A549 (cell line): ENCODE measurements at regions of chrX and their contacts with region 1.

Region 1: DNA sequence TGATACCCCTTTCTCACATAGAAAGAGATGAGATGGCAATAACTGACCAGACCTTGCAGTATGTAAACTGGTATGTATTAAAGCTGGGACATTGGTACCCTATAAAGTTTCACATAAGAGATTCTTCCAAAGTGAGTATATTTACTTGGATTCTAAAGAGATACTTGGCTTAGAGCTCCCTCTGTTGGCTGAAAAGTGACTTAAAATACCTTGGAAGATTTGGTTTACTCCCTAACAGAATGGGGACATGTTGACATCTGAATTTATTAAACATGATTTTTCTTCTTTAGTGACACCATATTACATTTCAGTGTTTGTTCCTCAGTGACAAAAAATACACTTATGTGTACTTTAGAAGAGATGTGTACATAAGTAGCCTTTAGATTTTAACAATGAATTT is 47.9 kb upstream of the RGN start:
- DNase-seq: peak; percentile 46 to 71
- ATAC-seq: peak in 1 of 2 experiments; percentile 71; a peak in 4 of 6 replicates
- H3K4me3 ChIP-seq: no peak overlapping the region
- H3K27ac ChIP-seq: no peak overlapping the region
- H3K4me1 ChIP-seq: no peaks in the 10 kb centered on the region
- CTCF ChIP-seq: peak; percentile 71
- EP300 ChIP-seq: no peak
- POLR2A ChIP-seq: no peak
- RAD21 ChIP-seq: peak; percentile 78 to 80

Region 2: DNA sequence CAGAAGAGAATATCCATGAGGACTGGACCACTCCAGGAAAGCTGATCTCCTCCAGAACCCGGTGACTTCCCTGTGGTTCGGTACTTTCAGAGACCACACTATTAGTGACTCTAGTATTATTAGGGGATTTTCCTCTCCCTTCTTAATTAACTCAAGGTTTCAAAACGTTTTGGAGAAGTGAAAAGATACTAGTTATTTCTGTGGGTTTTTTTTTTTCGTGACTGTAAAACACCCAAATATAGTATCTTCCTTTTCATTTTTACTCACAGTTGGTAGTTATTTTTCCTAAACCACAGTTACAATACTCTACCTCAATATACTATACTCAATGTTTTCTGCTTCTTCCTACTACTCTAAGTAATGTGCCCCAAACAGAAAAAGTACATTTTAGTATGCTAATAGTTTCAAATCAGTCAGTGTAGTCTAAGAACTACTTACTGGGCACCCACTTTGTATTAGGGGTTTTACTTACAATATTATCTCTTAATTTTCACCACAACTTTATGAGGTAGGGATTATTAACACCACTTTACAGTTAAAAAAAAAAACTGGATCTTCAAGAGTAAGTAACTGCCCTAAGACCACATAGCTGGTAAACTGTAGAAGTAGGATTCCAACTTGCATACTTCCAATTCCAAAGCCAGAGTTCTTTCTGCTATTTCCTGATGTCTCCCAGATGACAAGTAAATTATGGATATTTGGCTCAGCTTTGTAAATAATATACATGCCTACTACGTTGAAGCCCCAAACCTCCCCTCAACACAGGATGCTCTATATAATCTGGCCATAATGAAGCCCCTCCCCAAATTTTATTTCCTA is 316.5 kb before region 1 on chrX:
- CTCF ChIA-PET with region 1: no interaction called
- POLR2A ChIA-PET with region 1: no interaction called
- DNase-seq: no peak
- ATAC-seq: no peak
- H3K4me3 ChIP-seq: no peak overlapping the region
- H3K27ac ChIP-seq: no peak overlapping the region
- H3K4me1 ChIP-seq: peaks cover 9% of the 10 kb centered on the region; the same call in 2 of the 3 replicates
- CTCF ChIP-seq: no peak
- EP300 ChIP-seq: no peak
- POLR2A ChIP-seq: no peak
- RAD21 ChIP-seq: no peak

Region 3: DNA sequence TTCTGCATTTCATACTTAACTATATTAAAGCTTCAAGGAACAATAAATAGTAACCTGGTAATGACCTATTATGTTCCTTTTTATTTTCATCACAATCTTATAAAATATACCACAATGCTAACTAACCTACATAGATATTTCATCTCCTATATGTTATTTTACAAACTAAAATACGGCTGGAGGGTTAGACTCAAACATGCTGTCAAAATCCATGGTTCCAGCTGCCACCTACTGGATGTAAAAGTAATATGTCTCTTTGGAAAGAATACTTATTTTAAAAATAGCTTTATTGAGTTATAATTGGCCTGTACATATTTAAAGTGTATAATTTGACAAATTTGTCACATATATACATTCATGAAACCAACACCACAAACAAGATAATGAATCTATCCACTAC is 62.9 kb after region 1 on chrX:
- CTCF ChIA-PET with region 1: interaction called, 10 read pairs
- POLR2A ChIA-PET with region 1: no interaction called
- DNase-seq: peak; percentile 35 to 38
- ATAC-seq: peak in 1 of 2 experiments; percentile 50; a peak in 3 of 6 replicates
- H3K4me3 ChIP-seq: no peak overlapping the region
- H3K27ac ChIP-seq: no peak overlapping the region
- H3K4me1 ChIP-seq: no peaks in the 10 kb centered on the region
- CTCF ChIP-seq: peak; percentile 66
- EP300 ChIP-seq: no peak
- POLR2A ChIP-seq: no peak
- RAD21 ChIP-seq: peak; percentile 70 to 76